Right ventricle myocardium inferior (tissue), 1 donor: ENCODE measurements at regions of chr11 and their contacts with region 1.

Region 1: DNA sequence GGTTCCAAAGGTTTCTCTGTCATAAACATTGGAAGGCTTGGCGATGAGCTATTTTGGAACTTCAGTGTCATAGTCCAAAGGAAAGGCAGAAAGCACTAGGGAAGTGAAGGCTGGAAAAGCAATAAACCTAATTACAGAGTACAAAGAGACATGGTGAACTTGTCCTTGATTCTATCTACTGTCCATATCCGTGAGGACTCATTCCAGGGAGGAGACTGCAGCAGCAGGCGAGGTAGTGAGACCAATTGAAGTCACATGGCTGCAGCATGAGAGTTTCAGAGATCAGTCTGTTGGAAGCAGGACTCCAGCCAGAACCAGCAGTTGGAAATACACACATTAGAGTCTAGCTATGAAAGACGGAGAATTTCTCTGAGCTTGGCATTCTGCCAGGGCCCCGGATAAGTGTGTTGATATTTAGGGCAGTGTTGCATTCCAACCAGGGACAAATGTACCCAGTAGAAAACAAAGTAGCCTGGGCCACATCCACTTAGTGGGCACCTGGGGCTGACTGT is 54.1 kb upstream of the ARHGAP42 start:
- DNase-seq: peak; percentile 78
- ATAC-seq: peak; percentile 87

Region 2: GRCh38 chr11:100575870-100576705 is 56.9 kb before region 1 on chr11:
- intact Hi-C with region 1: loop called (anchors 5 kb)
- DNase-seq: no peak
- ATAC-seq: peak; percentile 79

Region 3: GRCh38 chr11:100687630-100688395 is 54.8 kb after region 1 on chr11:
- intact Hi-C with region 1: loop called (anchors 2 kb)
- DNase-seq: peak; percentile 74
- ATAC-seq: peak; percentile 75

Region 4: DNA sequence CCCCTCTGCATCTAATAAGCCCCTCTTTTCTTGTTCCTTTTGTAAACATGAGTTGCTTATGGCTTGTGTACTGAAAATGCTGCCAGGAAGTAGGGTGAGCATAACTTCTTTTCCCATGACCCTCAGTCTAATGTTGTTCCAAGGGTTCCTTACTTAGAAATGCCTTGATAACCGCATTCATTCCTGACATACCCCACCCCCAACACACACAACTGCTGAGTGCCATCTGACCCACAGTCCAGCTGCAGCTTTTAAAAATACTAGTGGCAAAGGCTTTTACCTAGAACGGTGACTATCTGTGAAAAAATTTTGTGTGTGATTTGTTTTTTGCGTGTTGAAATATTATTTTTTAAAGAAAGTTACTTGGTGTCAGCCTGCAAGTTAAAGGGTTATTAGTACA is 106.7 kb after region 1 on chr11:
- intact Hi-C with region 1: loop called (anchors 10 kb)
- DNase-seq: no peak
- ATAC-seq: peak; percentile 81

Region 5: GRCh38 chr11:100855466-100856067 is 222.6 kb after region 1 on chr11:
- intact Hi-C with region 1: loop called (anchors 5 kb)
- DNase-seq: no peak
- ATAC-seq: no peak